PC-3 (cell line): ENCODE measurements at regions of chr1 and their contacts with region 1.

Region 1: GRCh38 chr1:61504852-61505390 is 220.0 kb downstream of the TM2D1 start:
- DNase-seq: peak; percentile 63
- ATAC-seq: peak; percentile 68
- H3K4me3 ChIP-seq: no peak overlapping the region
- H3K27ac ChIP-seq: no peak overlapping the region
- H3K4me1 ChIP-seq: peaks cover 11% of the 10 kb centered on the region
- H3K27me3 ChIP-seq: no peaks in the 10 kb centered on the region
- CTCF ChIP-seq: no peak

Region 2: DNA sequence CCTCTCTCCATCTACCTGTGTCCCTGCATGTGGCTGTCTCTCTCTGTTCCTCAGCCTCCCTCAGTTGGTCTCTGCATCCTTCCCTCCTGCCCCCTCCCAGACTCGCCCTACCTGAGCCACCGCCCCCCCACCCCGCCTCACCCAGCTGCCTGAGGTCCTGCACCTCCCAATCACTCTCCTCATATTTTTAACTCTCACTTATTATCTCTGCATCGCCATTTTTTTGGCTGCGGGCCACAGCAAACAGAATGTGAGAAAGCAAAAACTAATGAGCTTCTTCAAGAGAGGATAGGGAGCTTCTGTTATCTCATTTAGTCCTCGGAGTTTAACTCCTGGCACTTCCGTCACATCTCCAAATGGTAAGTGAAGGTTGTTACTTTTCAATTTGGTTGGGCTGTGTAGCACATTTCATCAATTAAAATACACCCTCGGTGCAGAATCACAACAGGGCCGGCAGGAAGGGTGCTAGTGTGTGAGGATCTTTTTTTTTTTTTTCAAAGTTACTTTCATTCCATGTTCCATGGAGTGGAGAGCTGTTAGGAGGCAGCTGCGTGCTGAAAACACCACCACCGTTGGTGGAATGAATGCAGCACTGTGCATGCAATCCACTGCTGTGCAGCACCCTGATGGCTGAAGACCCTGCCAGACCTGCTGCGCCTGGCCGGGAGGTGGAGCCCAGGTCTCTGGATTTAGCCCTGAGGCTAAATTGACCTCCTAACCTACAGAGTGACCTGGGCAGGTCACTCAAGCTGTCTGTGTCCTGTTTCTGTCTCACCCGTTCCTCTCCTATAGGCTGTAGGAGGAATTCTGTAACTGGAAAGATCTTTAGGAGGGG is 579.7 kb before region 1 on chr1:
- CTCF ChIA-PET with region 1: no interaction called
- POLR2A ChIA-PET with region 1: interaction called, 12 read pairs
- intact Hi-C with region 1: no loop called
- DNase-seq: no peak
- ATAC-seq: no peak
- H3K4me3 ChIP-seq: no peak overlapping the region
- H3K27ac ChIP-seq: no peak overlapping the region
- H3K4me1 ChIP-seq: no peaks in the 10 kb centered on the region
- H3K27me3 ChIP-seq: peaks cover 16% of the 10 kb centered on the region; the same call in 1 of the 2 replicates
- CTCF ChIP-seq: no peak